A673 (cell line): ENCODE measurements at regions of chr15 and their contacts with region 1.

Region 1: GRCh38 chr15:65530314-65531122 is at the start of gene HACD3:
- DNase-seq: peak; percentile 96
- H3K4me3 ChIP-seq: peak within 1 kb of the TSS; percentile 95
- H3K27ac ChIP-seq: peak within 1 kb of the TSS; percentile 97
- H3K4me1 ChIP-seq: peaks cover 32% of the 10 kb centered on the region
- H3K27me3 ChIP-seq: no peaks in the 10 kb centered on the region
- CTCF ChIP-seq: no peak
- total RNA-seq, gene HACD3: 142 and 157 TPM in 2 replicates

Region 2: DNA sequence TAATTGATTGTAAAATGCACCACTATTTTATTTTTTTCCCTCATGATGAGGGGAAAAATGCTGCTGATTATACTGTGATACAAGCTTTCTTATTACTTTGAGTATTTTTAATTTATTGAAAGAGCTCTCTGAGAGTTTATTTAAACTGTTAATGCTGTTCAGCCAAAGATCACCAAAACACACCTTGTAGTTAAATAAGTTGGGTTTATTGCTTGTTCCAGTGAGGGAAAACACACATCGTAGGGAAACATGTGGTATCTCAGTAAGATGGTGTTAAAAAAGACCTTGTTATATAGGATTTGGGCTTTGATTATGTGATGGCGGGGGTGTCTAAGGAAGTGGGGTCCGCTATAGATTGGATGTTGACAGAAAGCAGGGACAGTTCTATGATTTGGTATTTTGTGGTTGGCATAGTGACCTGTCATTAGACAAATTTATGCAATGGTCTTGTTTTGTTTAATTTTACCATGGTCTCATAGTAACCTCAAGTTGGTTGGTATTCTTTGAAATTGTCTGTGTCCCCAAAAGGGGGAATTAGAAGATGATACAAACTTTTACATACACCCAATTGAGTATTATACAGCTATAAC is 10.8 kb after region 1 on chr15:
- CTCF ChIA-PET with region 1: interaction called, 3 read pairs
- POLR2A ChIA-PET with region 1: interaction called, 12 read pairs
- intact Hi-C with region 1: no loop called
- DNase-seq: no peak
- H3K4me3 ChIP-seq: no peak overlapping the region
- H3K27ac ChIP-seq: no peak overlapping the region
- H3K4me1 ChIP-seq: no peaks in the 10 kb centered on the region
- H3K27me3 ChIP-seq: no peaks in the 10 kb centered on the region
- CTCF ChIP-seq: no peak

Region 3: DNA sequence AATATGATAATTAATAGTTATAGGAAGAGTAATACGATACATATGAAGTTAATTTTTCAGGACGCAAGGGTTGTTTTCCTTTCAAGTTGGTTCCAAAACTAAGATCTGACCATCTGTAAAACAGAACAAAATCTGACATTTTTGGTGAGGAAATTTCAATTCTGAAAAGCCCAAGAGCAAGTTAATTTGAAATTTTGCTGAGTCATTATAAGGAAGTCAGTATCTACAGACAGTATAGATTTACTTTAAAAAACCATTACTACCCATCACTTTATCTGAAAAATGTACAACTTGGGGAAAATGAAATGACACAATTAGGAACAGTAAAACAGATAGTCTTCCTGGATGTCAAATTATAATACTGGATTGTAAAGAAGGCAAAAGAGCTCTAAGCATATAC is 68.0 kb after region 1 on chr15:
- CTCF ChIA-PET with region 1: no interaction called
- POLR2A ChIA-PET with region 1: interaction called, 16 read pairs
- intact Hi-C with region 1: no loop called
- DNase-seq: no peak
- H3K4me3 ChIP-seq: no peak overlapping the region
- H3K27ac ChIP-seq: peak overlapping the region; percentile 7
- H3K4me1 ChIP-seq: no peaks in the 10 kb centered on the region
- H3K27me3 ChIP-seq: no peaks in the 10 kb centered on the region
- CTCF ChIP-seq: no peak